MCF 10A (cell line): ENCODE measurements at regions of chr18 and their contacts with region 1.

Region 1: GRCh38 chr18:41906528-41907146 is 48.4 kb upstream of the PIK3C3 start:
- DNase-seq: peak; percentile 49
- H3K4me3 Mint-ChIP-seq: peak overlapping the region; percentile 52
- H3K27ac Mint-ChIP-seq: no peak overlapping the region
- H3K4me1 Mint-ChIP-seq: no peaks in the 10 kb centered on the region
- H3K27me3 Mint-ChIP-seq: no peaks in the 10 kb centered on the region
- CTCF ChIP-seq: peak; percentile 73

Region 2: GRCh38 chr18:41391616-41392595 is 514.7 kb before region 1 on chr18:
- CTCF ChIA-PET with region 1: interaction called, 7 read pairs
- POLR2A ChIA-PET with region 1: no interaction called
- intact Hi-C with region 1: loop called (anchors 1 kb)
- DNase-seq: peak; percentile 73
- H3K4me3 Mint-ChIP-seq: peak overlapping the region; percentile 72
- H3K27ac Mint-ChIP-seq: peak overlapping the region; percentile 85
- H3K4me1 Mint-ChIP-seq: peaks cover 6% of the 10 kb centered on the region
- H3K27me3 Mint-ChIP-seq: no peaks in the 10 kb centered on the region
- CTCF ChIP-seq: peak; percentile 75

Region 3: GRCh38 chr18:41745166-41746049 is 161.2 kb before region 1 on chr18:
- CTCF ChIA-PET with region 1: interaction called, 14 read pairs
- POLR2A ChIA-PET with region 1: no interaction called
- intact Hi-C with region 1: no loop called
- DNase-seq: peak; percentile 64
- H3K4me3 Mint-ChIP-seq: no peak overlapping the region
- H3K27ac Mint-ChIP-seq: peak overlapping the region; percentile 21
- H3K4me1 Mint-ChIP-seq: no peaks in the 10 kb centered on the region
- H3K27me3 Mint-ChIP-seq: peaks cover 11% of the 10 kb centered on the region
- CTCF ChIP-seq: peak; percentile 70

Region 4: GRCh38 chr18:41761333-41762028 is 145.2 kb before region 1 on chr18:
- CTCF ChIA-PET with region 1: interaction called, 14 read pairs
- POLR2A ChIA-PET with region 1: no interaction called
- intact Hi-C with region 1: no loop called
- DNase-seq: peak; percentile 91
- H3K4me3 Mint-ChIP-seq: no peak overlapping the region
- H3K27ac Mint-ChIP-seq: no peak overlapping the region
- H3K4me1 Mint-ChIP-seq: peaks cover 31% of the 10 kb centered on the region
- H3K27me3 Mint-ChIP-seq: no peaks in the 10 kb centered on the region
- CTCF ChIP-seq: no peak

Region 5: DNA sequence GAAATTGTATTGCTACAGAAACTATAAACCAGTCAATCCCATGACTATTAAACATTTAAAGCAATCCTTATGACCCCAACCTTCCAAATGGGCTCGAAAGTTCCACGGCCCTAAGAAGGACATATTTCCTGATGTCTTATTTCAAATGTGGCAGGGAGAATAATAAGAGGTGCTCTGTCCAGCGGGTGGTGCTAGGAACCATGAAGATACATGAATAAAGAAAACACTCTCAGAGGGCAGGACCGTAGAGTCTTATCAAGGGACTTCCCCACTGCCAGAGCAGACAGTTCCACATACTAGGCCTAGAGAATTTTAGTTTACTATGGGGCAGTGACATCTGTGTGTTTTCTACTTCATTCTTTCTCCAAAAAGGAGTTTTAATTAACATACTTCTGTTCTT is 138.7 kb before region 1 on chr18:
- CTCF ChIA-PET with region 1: interaction called, 14 read pairs
- POLR2A ChIA-PET with region 1: interaction called, 3 read pairs
- intact Hi-C with region 1: loop called (anchors 1 kb)
- DNase-seq: peak; percentile 59
- H3K4me3 Mint-ChIP-seq: no peak overlapping the region
- H3K27ac Mint-ChIP-seq: no peak overlapping the region
- H3K4me1 Mint-ChIP-seq: peaks cover under 1% of the 10 kb centered on the region
- H3K27me3 Mint-ChIP-seq: no peaks in the 10 kb centered on the region
- CTCF ChIP-seq: peak; percentile 19

Region 6: GRCh38 chr18:41850781-41851180 is 55.9 kb before region 1 on chr18:
- CTCF ChIA-PET with region 1: interaction called, 10 read pairs
- POLR2A ChIA-PET with region 1: no interaction called
- intact Hi-C with region 1: no loop called
- DNase-seq: no peak
- H3K4me3 Mint-ChIP-seq: no peak overlapping the region
- H3K27ac Mint-ChIP-seq: no peak overlapping the region
- H3K4me1 Mint-ChIP-seq: peaks cover 7% of the 10 kb centered on the region
- H3K27me3 Mint-ChIP-seq: no peaks in the 10 kb centered on the region
- CTCF ChIP-seq: no peak

Region 7: DNA sequence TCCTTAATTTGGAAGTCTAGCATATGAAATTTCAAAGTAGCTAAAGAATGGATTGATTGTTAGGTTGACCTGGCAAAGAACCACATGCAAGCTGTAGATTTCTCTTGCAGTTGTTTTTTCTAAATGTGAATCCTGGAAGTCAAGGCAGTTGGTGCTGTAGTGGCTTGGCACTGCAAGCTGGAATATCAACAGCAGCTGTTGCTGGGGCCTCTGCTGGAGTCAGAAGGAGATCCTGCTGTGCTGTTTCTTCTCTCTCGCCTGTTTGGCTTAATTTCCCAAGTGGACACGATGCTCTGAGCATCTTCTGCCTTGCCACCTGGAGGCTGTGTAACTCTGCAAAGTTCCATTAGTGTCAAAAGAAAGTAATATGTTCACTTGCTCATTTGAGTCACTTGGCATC is 61.0 kb after region 1 on chr18:
- CTCF ChIA-PET with region 1: no interaction called
- POLR2A ChIA-PET with region 1: no interaction called
- intact Hi-C with region 1: no loop called
- DNase-seq: no peak
- H3K4me3 Mint-ChIP-seq: no peak overlapping the region
- H3K27ac Mint-ChIP-seq: no peak overlapping the region
- H3K4me1 Mint-ChIP-seq: no peaks in the 10 kb centered on the region
- H3K27me3 Mint-ChIP-seq: no peaks in the 10 kb centered on the region
- CTCF ChIP-seq: no peak